Testis (tissue), 5 donors: ENCODE measurements at regions of chr17 and their contacts with region 1.

Region 1: DNA sequence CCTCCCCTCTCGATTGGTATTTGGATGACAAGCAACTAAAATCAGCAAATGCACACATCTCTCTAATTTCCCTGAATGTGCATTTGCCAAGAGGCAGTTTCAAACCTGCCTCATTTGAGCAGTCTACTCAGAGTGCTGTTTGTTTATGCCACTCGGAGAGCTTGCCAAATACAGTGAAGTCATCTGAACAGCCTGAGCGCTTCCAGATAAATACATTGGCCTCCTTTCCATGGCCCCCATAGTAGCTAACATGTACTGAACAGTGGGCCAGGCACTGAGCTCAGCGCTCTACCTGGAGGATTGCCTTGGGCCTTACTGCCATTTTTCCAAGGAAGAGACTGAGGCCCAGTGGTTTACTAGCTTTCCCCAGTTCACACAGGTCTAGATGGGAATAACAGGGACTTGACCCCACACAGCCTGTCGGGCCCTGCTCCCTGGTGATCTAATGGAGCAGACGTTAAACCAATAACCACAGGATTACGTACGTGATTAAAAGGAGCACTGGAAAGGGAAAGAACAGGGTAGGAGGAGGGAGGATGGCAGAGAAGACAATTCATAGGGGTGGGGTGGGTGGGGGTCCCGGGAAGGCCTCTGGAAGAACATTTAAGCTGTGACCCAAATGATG is 18.7 kb upstream of the ANKRD40CL start:
- DNase-seq: peak; percentile 56
- H3K4me3 ChIP-seq: no peak overlapping the region
- H3K27ac ChIP-seq: no peak overlapping the region
- H3K4me1 ChIP-seq: no peaks in the 10 kb centered on the region
- H3K27me3 ChIP-seq: no peaks in the 10 kb centered on the region
- CTCF ChIP-seq: no peak
- POLR2A ChIP-seq: no peak

Region 2: DNA sequence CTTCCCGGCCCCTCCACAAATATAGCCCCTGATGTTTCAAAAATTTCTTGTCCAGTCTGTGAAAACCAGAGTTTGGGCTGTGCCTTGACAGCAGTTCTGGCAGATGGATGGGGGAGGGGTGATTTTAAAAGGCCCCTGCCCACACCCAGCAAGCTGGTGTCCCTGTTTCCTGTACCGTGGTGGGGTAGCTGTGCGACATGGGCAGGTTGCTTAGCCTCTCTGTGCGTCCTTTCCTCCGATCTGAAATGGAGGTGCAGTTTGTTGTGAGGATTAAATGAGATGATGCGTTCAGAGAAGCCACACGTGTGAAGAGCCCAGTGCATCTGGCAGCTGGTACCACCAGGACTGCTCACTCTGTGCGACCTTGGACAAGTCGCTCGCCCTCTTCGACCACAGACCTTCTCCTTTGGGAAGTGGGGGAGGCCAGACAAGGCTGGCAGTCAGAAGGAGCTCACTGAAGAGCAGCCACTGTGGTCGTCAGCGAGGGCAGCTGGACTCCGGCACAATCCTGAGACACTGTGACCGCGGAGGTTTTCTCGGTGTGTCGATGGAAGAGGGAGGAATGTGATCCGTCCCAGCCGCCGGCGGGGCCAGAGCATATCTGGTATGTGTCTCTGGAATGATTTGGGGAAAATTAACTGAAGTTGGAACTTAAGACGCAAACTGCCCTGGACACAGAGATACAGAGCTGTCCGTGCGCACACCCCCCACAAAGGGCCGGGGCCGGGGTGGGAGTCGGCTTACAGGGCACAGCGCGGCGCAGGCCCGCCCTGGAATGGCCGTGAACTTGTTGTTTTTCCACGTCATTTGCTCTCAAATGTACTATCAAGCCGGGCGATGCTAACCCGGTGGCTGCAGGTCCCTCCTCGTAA is 48.6 kb after region 1 on chr17:
- intact Hi-C with region 1: loop called (anchors 5 kb)
- DNase-seq: peak; percentile 80
- H3K4me3 ChIP-seq: peak overlapping the region in 1 of 2 donors; percentile 2
- H3K27ac ChIP-seq: peak overlapping the region; percentile 59 to 87
- H3K4me1 ChIP-seq: peaks cover 59% of the 10 kb centered on the region
- H3K27me3 ChIP-seq: no peaks in the 10 kb centered on the region
- CTCF ChIP-seq: no peak
- POLR2A ChIP-seq: no peak